ENCODE measurements at regions of chr10 and their contacts with region 1.

Region 1: GRCh38 chr10:121974535-121975294 is at the start of gene NSMCE4A:
- DNase-seq: no peak
- H3K4me3 ChIP-seq: peak within 1 kb of the TSS; percentile 75 to 96 (median 90)
- H3K27ac ChIP-seq: peak within 1 kb of the TSS; percentile 95 to 99 (median 99)
- H3K4me1 ChIP-seq: peaks cover 19 to 35% (median 34%) of the 10 kb centered on the region in 4 donors
- H3K27me3 ChIP-seq: no peaks in the 10 kb centered on the region
- CTCF ChIP-seq: no peak
- EP300 ChIP-seq: no peak
- POLR2A ChIP-seq: peak; percentile 8
- total RNA-seq, gene NSMCE4A: 63.9 to 96.8 (median 82.0) TPM

Region 2: DNA sequence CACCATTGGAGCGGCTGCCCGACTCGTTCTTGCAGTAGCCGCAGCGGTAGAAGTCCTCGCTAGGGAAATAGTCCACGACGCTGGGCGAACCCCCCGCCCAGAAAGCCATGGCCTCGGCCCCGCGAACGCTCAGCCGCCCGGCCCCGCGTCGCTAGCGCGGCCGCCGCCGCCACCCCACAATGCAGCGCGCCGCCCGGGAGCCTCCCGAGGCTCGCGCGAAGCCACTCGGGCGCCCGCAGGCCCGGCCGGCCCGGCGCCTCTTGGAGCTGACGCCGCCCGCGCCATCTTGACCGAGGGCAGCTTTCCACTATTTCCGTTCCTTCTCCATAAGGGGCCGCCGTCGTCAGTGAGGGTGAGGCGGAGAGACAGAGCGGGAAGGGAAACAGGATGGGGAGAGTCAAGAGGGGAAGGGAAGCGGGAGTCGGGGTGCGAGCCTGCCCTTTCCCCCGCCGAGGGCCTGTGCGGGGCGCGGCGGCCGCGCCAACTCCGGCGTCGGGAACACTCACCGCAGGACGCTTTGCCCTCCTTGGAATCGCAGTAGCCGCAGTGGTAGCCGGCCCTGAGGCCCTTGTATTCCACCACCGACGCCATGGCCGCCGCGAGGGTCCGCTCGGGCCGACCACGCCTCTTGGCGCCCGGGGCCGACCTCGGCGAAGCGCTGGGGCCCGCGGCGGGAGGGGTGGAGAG is 46.7 kb before region 1 on chr10 and contains the start of gene ATE1:
- intact Hi-C with region 1: loop called (anchors 5 kb)
- DNase-seq: peak; percentile 96
- H3K4me3 ChIP-seq: peak within 1 kb of the TSS; percentile 96 to 100 (median 99)
- H3K27ac ChIP-seq: peak within 1 kb of the TSS; percentile 99 to 100 (median 100)
- H3K4me1 ChIP-seq: peaks cover 15 to 42% (median 31%) of the 10 kb centered on the region in 4 donors
- H3K27me3 ChIP-seq: no peaks in the 10 kb centered on the region
- CTCF ChIP-seq: peak in 2 of 3 experiments; percentile 8 to 30
- EP300 ChIP-seq: no peak
- POLR2A ChIP-seq: peak; percentile 20
- total RNA-seq, gene ATE1: 27.8 to 29.5 (median 28.4) TPM

Region 3: GRCh38 chr10:122112625-122113160 is 138.0 kb after region 1 on chr10:
- intact Hi-C with region 1: loop called (anchors 5 kb)
- DNase-seq: peak; percentile 95
- H3K4me3 ChIP-seq: peak overlapping the region; percentile 69 to 88 (median 80)
- H3K27ac ChIP-seq: peak overlapping the region; percentile 95 to 100 (median 98)
- H3K4me1 ChIP-seq: peaks cover 45 to 52% (median 48%) of the 10 kb centered on the region in 4 donors
- H3K27me3 ChIP-seq: no peaks in the 10 kb centered on the region
- CTCF ChIP-seq: peak; percentile 55 to 68 (median 64)
- EP300 ChIP-seq: peak; percentile 69
- POLR2A ChIP-seq: peak; percentile 59

Region 4: GRCh38 chr10:122258136-122259074 is 283.7 kb after region 1 on chr10:
- intact Hi-C with region 1: loop called (anchors 10 kb)
- DNase-seq: no peak
- H3K4me3 ChIP-seq: no peak overlapping the region
- H3K27ac ChIP-seq: peak overlapping the region; percentile 22 to 66 (median 56)
- H3K4me1 ChIP-seq: peaks cover 4 to 17% (median 13%) of the 10 kb centered on the region in 4 donors
- H3K27me3 ChIP-seq: no peaks in the 10 kb centered on the region
- CTCF ChIP-seq: no peak
- EP300 ChIP-seq: no peak
- POLR2A ChIP-seq: no peak

Measured in esophagus muscularis mucosa (tissue), 4 donors.